A549 (cell line): ENCODE measurements at regions of chr6 and their contacts with region 1.

Region 1: DNA sequence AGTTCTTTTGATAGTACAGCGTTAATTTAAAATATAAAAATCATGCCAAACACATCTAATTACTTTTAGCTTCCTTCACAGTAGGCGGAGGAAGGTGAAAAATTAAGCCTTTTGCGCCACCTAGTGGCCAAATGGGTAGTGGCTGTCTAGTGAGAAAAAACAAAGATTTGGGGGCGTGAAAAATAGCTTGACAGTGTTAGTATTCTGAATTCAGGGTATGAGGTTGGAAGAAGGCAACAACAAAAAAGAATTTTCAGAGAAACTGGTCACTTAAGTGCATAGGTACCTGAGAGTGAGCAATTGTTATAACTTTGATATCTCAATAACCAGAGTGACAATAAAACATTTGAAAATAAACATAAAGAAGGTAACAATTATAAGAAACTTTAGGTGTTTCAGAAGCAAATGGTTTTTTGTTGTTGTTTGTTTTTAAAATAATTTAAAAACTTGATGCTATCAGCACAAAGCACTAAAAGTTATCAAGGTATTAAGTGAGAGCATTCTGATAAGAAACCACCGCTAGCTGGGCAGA is 14.3 kb downstream of the PSMB9 start:
- DNase-seq: peak; percentile 20 to 63
- ATAC-seq: peak; percentile 84 to 86; a peak in 5 of 6 replicates
- H3K4me3 ChIP-seq: no peak overlapping the region
- H3K27ac ChIP-seq: no peak overlapping the region
- H3K4me1 ChIP-seq: no peaks in the 10 kb centered on the region
- CTCF ChIP-seq: peak; percentile 83
- EP300 ChIP-seq: no peak
- POLR2A ChIP-seq: no peak
- RAD21 ChIP-seq: peak; percentile 88 to 91

Region 2: DNA sequence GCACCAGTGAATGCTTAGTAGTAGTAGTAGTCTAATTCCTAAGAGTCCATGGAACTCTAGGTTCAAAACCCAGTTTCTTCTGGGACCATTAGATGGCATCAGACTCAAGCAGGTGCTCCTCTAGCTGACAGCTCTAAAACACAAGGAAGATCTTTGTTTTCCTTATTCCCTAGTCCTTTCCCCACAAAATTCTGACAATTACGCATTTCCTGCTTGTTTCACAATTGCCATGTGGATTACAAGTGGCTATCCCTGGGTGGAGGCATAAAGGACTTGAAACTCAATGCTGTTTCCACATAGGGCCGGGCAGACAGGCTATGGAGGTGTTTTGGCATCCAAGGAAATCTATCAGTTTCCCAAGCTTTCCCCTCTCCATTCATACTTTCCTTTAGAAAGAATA is 42.4 kb before region 1 on chr6:
- CTCF ChIA-PET with region 1: interaction called, 31 read pairs
- POLR2A ChIA-PET with region 1: interaction called, 7 read pairs
- DNase-seq: peak in 1 of 2 experiments; percentile 24
- ATAC-seq: peak; percentile 68 to 71; a peak in 5 of 6 replicates
- H3K4me3 ChIP-seq: no peak overlapping the region
- H3K27ac ChIP-seq: no peak overlapping the region
- H3K4me1 ChIP-seq: no peaks in the 10 kb centered on the region
- CTCF ChIP-seq: peak; percentile 40
- EP300 ChIP-seq: no peak
- POLR2A ChIP-seq: no peak
- RAD21 ChIP-seq: peak; percentile 47 to 49

Region 3: DNA sequence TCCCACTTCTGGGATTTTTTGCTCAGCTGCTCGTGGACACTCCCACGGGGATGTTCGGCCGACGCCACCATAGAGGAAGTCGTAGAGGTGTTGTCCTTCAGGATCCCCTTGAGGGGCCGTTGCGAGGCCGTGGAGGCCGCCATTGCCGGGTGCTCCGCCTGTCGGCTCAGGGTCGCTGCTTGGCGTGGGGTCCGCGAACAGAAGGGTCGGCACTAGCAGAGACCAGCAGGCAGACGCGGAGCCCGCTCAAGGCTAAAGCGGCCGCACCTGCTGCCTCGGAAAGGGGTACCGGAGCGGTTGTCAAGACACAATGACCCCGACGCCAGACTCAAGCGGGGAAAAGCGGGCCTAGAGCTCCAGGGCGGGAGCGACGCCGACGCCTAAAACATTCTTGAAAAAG is 11.4 kb after region 1 on chr6:
- CTCF ChIA-PET with region 1: interaction called, 20 read pairs
- POLR2A ChIA-PET with region 1: no interaction called
- DNase-seq: no peak
- ATAC-seq: no peak
- H3K4me3 ChIP-seq: no peak overlapping the region
- H3K27ac ChIP-seq: no peak overlapping the region
- H3K4me1 ChIP-seq: no peaks in the 10 kb centered on the region
- CTCF ChIP-seq: no peak
- EP300 ChIP-seq: no peak
- POLR2A ChIP-seq: no peak
- RAD21 ChIP-seq: no peak

Region 4: GRCh38 chr6:32947552-32948465 is 79.5 kb after region 1 on chr6:
- CTCF ChIA-PET with region 1: interaction called, 14 read pairs
- POLR2A ChIA-PET with region 1: no interaction called
- DNase-seq: peak in 1 of 2 experiments; percentile 75
- ATAC-seq: peak; percentile 92 to 95
- H3K4me3 ChIP-seq: no peak overlapping the region
- H3K27ac ChIP-seq: no peak overlapping the region
- H3K4me1 ChIP-seq: peaks cover 4% of the 10 kb centered on the region; the same call in 1 of the 3 replicates
- CTCF ChIP-seq: peak; percentile 78
- EP300 ChIP-seq: no peak
- POLR2A ChIP-seq: no peak
- RAD21 ChIP-seq: peak; percentile 91 to 94

Region 5: DNA sequence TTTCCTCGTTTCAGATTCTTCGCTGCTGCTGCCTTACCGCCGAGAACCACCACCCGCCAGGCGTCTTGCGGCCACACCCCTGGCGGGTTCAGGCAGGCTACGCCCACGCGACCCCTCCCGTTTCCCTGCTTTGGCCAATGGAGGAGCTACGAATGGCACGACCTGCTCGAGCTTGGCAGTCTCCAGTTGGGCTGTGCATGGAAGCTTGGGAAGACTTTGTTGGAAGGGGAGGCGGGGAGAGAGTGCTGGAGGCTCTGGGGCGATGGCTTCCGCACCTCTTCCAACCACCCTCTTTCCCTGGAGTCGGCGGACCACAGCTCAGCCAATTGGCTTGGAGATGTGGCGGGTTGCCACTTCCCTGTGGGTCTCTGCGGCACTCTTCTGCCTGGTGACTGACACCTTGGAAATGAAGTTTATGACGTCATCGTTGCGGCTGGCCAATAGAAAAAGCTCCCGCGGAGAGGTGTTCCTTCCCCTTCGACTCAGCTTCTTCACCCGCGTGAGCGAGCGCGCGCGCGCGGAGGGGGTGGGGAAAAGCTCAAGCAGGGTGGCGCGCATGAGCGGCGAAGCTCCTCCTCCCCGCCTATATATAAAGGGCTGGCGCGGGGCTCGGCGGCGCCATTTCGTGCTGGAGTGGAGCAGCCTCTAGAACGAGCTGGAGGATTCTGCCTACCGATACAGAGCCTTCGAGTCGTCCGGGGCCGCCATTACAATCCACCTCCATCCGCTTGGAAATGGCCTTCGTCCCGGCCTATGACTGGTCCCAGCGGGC is 103.4 kb after region 1 on chr6:
- CTCF ChIA-PET with region 1: interaction called, 5 read pairs
- POLR2A ChIA-PET with region 1: interaction called, 11 read pairs
- DNase-seq: peak; percentile 79 to 99
- ATAC-seq: peak; percentile 49 to 70
- H3K4me3 ChIP-seq: peak overlapping the region; percentile 72
- H3K27ac ChIP-seq: peak overlapping the region; percentile 99 to 100
- H3K4me1 ChIP-seq: peaks cover 22% of the 10 kb centered on the region
- CTCF ChIP-seq: no peak
- EP300 ChIP-seq: no peak
- POLR2A ChIP-seq: peak; percentile 99
- RAD21 ChIP-seq: no peak

Region 6: DNA sequence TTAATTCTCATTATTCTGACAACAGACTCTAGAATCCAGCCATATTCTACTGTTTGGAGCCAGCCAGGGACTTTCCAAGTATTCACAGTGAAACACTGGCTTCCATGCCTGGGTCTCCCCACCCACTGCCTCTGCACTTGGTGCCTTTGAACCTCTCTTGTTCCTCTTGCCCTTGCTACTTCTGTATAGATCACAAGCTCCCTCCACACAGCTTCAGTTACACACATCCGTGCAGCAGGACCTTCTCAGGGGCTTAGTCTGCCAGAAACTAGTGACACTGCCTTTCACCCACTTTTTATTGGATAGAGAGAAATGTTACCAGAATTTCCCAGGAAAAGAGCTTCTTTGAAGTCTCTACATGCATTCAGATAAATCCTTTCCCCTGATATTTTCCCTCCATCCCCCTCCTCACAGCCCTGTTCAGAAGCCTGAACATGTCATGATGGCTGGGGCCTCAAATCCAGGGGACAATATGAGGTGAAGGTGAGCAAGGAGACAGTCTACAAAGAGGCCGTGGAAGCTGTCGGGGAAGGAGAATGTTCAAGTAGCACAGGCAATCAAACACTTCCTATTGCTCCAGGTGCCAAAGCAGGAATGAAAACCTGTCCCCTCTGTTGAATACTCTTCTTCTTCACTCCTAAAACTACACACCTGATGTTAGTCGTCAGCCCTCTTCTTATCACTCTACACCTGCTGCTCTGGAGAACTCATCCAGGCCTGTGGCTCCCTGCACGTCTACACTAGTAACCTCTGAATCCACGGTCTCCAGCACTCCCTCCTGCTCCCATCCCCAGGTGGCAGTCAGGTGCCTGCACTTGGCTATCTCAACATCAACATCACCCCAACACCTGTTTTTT is 161.2 kb after region 1 on chr6:
- CTCF ChIA-PET with region 1: no interaction called
- POLR2A ChIA-PET with region 1: no interaction called
- DNase-seq: no peak
- ATAC-seq: peak; percentile 45 to 59; a peak in 2 of 6 replicates
- H3K4me3 ChIP-seq: no peak overlapping the region
- H3K27ac ChIP-seq: no peak overlapping the region
- H3K4me1 ChIP-seq: no peaks in the 10 kb centered on the region
- CTCF ChIP-seq: no peak
- EP300 ChIP-seq: no peak
- POLR2A ChIP-seq: no peak
- RAD21 ChIP-seq: no peak

Region 7: GRCh38 chr6:33082702-33083101 is 214.4 kb after region 1 on chr6:
- CTCF ChIA-PET with region 1: no interaction called
- POLR2A ChIA-PET with region 1: no interaction called
- DNase-seq: peak; percentile 24 to 50
- ATAC-seq: peak; percentile 60 to 92; a peak in 4 of 6 replicates
- H3K4me3 ChIP-seq: no peak overlapping the region
- H3K27ac ChIP-seq: no peak overlapping the region
- H3K4me1 ChIP-seq: no peaks in the 10 kb centered on the region
- CTCF ChIP-seq: peak; percentile 39
- EP300 ChIP-seq: no peak
- POLR2A ChIP-seq: no peak
- RAD21 ChIP-seq: peak in 1 of 2 experiments; percentile 36; a peak in 2 of 5 replicates

Region 8: GRCh38 chr6:34074064-34074742 is 1205.9 kb after region 1 on chr6:
- CTCF ChIA-PET with region 1: no interaction called
- POLR2A ChIA-PET with region 1: no interaction called
- DNase-seq: no peak
- ATAC-seq: peak; percentile 48 to 80; a peak in 4 of 6 replicates
- H3K4me3 ChIP-seq: no peak overlapping the region
- H3K27ac ChIP-seq: no peak overlapping the region
- H3K4me1 ChIP-seq: no peaks in the 10 kb centered on the region
- CTCF ChIP-seq: no peak
- EP300 ChIP-seq: no peak
- POLR2A ChIP-seq: no peak
- RAD21 ChIP-seq: no peak